ENCODE measurements at regions of chr5 and their contacts with region 1.

Region 1: DNA sequence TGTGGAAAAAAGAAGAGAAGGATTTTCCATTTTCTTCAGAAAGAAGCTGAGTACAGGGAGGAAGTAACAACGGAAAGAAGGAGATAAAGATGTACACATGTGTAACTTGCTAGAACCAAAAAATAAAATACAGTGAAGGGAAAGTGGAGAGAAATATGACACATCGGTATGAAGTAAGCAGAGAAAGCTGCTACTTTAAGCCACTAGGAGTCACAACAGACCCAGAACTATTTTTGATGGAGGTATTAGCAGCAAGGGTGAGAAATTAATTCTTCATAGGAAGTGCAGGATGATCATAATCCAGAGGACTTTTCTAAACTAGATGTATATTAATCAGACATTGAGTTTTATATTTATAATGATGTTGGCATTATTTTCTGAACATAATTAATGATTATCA is 88.5 kb downstream of the FAM174A start:
- DNase-seq: peak in 1 of 4 experiments; percentile 26
- ATAC-seq: peak; percentile 77
- H3K4me3 ChIP-seq: no peak overlapping the region
- H3K27ac ChIP-seq: no peak overlapping the region
- H3K4me1 ChIP-seq: no peaks in the 10 kb centered on the region
- H3K27me3 ChIP-seq: no peaks in the 10 kb centered on the region
- CTCF ChIP-seq: peak in 2 of 3 experiments; percentile 40 to 49; a peak in 3 of 6 replicates
- EP300 ChIP-seq: no peak
- POLR2A ChIP-seq: no peak
- RAD21 ChIP-seq: peak; percentile 52 to 73

Region 2: GRCh38 chr5:100777680-100778281 is 154.1 kb after region 1 on chr5:
- CTCF ChIA-PET with region 1: no interaction called
- POLR2A ChIA-PET with region 1: no interaction called
- in situ Hi-C with region 1: no loop called
- intact Hi-C with region 1: loop called (anchors 10 kb)
- DNase-seq: peak in 1 of 4 experiments; percentile 1
- ATAC-seq: no peak
- H3K4me3 ChIP-seq: no peak overlapping the region
- H3K27ac ChIP-seq: no peak overlapping the region
- H3K4me1 ChIP-seq: no peaks in the 10 kb centered on the region
- H3K27me3 ChIP-seq: no peaks in the 10 kb centered on the region
- CTCF ChIP-seq: no peak
- EP300 ChIP-seq: no peak
- POLR2A ChIP-seq: no peak
- RAD21 ChIP-seq: no peak

Region 3: DNA sequence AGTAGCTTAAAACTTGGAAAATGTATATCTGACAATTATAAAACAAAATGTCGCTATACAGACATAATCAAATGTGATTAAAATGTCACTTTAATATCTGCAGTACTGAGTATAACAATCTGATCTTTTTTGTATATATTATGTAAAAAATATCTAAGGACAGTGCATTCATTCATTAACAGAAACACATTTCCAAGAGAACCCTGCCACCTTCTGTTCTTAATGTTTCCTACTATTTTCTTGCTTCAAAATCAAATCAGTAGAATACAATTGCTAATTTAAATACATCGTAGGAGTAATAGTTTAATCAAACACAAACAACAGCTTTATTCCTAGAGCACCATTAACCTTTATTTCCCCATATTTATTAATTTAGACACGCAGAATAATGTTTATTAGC is 422.0 kb after region 1 on chr5:
- CTCF ChIA-PET with region 1: no interaction called
- POLR2A ChIA-PET with region 1: no interaction called
- in situ Hi-C with region 1: no loop called
- intact Hi-C with region 1: loop called (anchors 5 kb)
- DNase-seq: no peak
- ATAC-seq: no peak
- H3K4me3 ChIP-seq: no peak overlapping the region
- H3K27ac ChIP-seq: no peak overlapping the region
- H3K4me1 ChIP-seq: no peaks in the 10 kb centered on the region
- H3K27me3 ChIP-seq: no peaks in the 10 kb centered on the region
- CTCF ChIP-seq: peak in 1 of 3 experiments; percentile 25; a peak in 1 of 6 replicates
- EP300 ChIP-seq: no peak
- POLR2A ChIP-seq: no peak
- RAD21 ChIP-seq: peak in 1 of 2 experiments; percentile 34; a peak in 2 of 4 replicates